ENCODE measurements at regions of chr12 and their contacts with region 1.

Region 1: GRCh38 chr12:32302218-32303173 is 96.9 kb upstream of the FGD4 start:
- DNase-seq: no peak
- ATAC-seq: peak; percentile 57

Region 2: GRCh38 chr12:31659087-31659933 is 643.2 kb before region 1 on chr12 and contains the start of gene ETFBKMT:
- intact Hi-C with region 1: loop called (anchors 10 kb)
- DNase-seq: peak; percentile 89
- ATAC-seq: peak; percentile 96
- total RNA-seq, gene ETFBKMT: 7.9 TPM

Region 3: DNA sequence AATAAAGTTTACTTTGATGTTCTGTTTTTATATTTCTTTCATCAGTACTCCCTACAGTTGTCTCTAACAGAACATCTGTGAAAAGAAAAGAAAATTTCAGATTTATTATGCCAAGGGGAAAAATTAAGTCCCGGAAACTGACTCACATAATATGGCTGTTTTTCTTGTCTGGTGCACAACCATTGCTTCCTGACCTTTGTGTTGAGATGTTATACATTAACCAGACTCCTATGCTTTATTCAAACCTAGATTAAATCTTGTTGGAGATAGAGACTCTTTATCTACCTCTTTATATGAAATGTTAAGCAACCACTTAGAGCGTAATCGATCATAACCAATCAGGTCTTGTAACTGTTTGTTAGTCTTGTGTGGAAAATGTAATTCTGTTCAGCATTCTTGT is 233.4 kb before region 1 on chr12:
- intact Hi-C with region 1: loop called (anchors 10 kb)
- DNase-seq: no peak
- ATAC-seq: no peak

Region 4: DNA sequence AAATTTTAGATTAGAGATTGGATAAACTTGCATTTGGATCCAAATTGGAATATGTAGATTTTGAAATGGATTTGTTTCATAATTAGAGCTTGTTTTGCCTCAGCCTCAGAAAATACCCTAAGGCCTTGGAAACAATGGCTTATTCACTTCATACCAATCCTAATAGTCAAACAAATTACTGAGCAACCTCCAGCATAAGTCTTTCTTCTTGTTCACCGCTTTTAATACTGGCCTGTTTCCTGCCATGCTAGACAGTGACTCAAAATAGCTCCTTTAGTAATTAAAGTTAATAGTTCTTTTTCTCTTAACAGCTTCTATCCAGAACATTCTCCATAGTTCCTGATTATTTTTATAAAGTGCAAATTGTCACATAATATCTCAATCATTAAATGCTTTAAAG is 265.7 kb after region 1 on chr12:
- intact Hi-C with region 1: no loop called
- DNase-seq: no peak
- ATAC-seq: peak; percentile 57

Measured in left ventricle myocardium superior (tissue), 1 donor.